WTC11 (cell line): ENCODE measurements at regions of chr2 and their contacts with region 1.

Region 1: DNA sequence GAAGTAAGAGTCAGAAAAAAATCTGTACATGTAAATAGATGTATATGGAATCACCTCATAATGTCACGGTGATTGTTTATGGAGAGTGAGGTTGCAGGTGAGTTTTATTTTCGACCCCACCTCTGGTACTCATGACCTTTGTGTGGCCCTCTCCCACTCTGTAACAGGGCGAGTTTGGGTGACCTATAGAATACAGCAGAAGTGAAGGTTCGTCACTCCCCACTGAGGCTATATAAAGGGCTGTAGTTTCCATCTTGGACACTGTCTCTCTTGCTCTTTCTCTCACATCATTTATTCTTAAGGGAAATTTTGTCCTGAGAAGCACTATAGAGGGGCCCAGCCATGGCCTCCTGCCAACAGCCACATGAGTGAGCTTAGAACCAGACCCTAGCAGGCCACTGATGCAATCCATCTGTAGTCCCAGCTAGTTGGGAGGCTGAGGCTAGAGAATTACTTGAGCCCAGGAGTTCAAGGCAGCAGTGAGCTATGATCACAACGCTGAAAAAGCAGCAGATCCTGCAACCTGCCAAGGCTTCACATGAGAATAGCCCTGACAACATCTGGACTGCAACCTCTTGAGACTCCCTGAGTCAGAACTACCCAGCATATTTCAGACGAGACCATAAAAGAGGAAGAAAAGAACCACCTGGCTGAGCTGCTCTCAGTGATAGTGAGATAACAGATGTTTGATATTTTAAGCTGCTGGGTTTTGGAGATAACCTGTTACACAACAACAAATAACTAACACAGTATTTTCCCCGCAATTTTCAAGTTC is 74.3 kb upstream of the SLC1A4 start:
- DNase-seq: no peak
- ATAC-seq: no peak
- H3K4me3 Mint-ChIP-seq: no peak overlapping the region
- H3K27ac Mint-ChIP-seq: no peak overlapping the region
- H3K4me1 Mint-ChIP-seq: peaks cover 39% of the 10 kb centered on the region
- H3K27me3 Mint-ChIP-seq: peaks cover 15% of the 10 kb centered on the region
- CTCF ChIP-seq: no peak

Region 2: DNA sequence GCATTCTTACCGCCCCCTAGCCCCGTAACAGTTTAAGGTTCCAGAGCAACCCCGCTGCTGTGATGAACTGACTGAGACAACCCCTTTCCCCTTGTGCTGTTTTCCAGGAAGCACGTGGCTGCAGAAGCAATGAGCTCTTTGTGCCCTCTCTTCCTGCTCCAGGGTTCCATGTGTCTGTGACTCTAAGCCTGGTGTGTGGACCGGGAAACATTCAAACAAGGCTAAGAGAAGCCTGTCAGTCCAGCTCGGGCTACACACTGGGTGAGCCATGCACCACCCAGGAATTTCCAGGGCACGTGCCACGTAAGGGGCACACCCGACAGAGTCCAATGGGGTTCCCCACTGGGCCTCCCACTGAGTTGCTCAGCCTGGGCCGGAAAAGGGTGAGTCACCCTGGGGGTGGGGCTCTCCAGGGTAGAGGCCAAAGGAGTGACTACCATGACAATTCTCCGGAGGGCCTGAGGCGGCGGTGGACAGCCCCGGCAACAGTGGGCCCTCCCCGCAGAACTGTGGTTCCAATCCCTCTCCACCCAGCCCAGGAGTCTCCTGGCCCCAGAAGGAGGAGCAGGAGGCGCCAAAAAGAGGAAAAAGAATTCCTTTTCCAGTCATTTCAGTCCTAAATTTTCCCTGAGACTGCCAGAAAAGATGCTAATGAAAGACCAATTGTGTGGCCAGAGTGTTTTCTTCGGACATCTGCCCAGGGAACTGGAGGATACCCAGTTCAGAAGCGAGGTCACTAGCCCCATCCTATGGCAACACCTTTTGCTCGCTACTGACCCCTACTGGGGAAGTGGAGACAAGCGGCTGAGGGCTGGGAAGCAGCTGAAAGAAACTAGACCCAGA is 83.6 kb before region 1 on chr2:
- CTCF ChIA-PET with region 1: no interaction called
- POLR2A ChIA-PET with region 1: no interaction called
- DNase-seq: peak; percentile 89
- ATAC-seq: peak; percentile 93
- H3K4me3 Mint-ChIP-seq: no peak overlapping the region
- H3K27ac Mint-ChIP-seq: no peak overlapping the region
- H3K4me1 Mint-ChIP-seq: 0 out of 2 replicates have a peak, but pooled peaks cover 6% of the 10 kb centered on the region
- H3K27me3 Mint-ChIP-seq: peaks cover 4% of the 10 kb centered on the region; the same call in 1 of the 2 replicates
- CTCF ChIP-seq: peak; percentile 85

Region 3: DNA sequence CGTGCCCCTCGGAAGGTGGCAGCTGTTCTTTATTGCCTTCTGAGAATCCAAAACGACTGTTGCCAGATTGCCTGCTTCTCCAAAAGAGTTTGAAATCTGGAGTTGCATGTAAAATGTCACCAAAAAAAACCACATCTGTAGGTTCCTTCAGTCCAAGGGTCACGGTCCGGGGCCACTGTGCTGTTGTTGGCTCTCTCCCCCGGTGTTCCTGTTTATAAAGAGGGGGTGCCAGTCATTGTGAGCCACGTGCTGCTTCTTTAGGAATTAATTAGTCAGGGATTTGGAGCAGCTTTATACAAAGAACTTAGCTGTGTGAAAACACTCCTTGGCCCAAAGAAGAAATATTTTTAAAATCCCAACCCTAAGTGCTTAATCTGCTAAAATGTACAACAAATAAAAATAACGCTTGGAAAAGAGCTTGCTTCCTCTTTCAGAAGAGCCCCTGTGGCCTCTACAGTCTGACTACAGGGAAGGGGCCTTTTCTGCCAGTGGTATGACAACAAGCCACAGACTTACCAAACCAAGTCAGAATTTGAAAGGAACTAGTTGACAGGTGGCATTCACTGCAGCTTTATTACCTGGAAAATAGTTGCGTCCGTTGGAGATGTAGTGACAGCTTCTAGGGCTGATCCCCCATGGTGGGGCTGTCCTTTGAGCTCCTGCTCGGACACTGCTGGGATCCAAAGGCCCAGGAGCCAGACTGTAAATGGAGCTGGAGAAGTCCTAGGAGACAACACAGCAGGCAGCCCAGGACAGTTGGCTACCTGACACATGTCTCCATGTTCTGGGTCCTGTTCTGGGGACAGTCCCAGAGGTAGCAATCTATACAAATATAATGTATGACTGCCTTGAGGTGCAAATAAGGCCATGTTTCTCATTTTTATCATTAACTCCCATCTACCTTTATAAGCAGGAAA is 10.3 kb before region 1 on chr2:
- CTCF ChIA-PET with region 1: interaction called, 40 read pairs
- POLR2A ChIA-PET with region 1: no interaction called
- DNase-seq: no peak
- ATAC-seq: no peak
- H3K4me3 Mint-ChIP-seq: no peak overlapping the region
- H3K27ac Mint-ChIP-seq: no peak overlapping the region
- H3K4me1 Mint-ChIP-seq: peaks cover 15% of the 10 kb centered on the region
- H3K27me3 Mint-ChIP-seq: no peaks in the 10 kb centered on the region
- CTCF ChIP-seq: no peak

Region 4: DNA sequence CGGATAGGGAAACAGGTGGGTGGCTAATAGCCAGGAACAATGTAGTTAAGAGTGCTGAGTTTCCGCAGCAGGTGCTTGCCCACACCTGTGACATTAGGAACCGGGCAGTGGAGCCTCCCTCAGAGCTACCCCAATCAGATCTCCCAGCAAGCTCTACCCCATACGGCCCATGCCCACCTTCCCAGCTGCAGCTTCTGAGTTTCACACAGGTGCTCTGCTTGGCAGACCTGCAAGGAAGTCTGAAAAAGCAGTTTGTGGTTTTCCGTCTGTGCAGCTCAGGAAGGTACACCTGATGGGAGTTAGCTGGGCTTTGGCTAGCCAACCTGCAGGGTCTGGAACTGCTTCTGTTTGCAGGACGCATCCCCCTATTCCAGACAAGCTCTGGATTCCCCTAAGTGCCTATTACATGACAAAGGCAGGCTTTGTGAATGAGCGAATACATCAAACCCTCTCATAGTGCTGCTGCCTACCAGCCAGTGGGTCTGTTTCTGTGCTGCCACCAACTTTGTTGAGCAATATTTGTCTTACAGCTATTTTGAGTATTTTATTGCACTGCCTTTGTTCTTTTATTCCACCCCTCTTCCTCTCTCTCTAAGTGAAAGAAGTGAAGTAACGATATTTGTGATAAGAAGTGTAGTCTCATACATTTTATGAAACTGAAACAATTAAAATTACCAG is 116.6 kb after region 1 on chr2:
- CTCF ChIA-PET with region 1: interaction called, 39 read pairs
- POLR2A ChIA-PET with region 1: no interaction called
- DNase-seq: peak; percentile 53
- ATAC-seq: peak; percentile 90
- H3K4me3 Mint-ChIP-seq: peak overlapping the region; percentile 30
- H3K27ac Mint-ChIP-seq: peak overlapping the region; percentile 85
- H3K4me1 Mint-ChIP-seq: peaks cover 36% of the 10 kb centered on the region
- H3K27me3 Mint-ChIP-seq: no peaks in the 10 kb centered on the region
- CTCF ChIP-seq: no peak

Region 5: DNA sequence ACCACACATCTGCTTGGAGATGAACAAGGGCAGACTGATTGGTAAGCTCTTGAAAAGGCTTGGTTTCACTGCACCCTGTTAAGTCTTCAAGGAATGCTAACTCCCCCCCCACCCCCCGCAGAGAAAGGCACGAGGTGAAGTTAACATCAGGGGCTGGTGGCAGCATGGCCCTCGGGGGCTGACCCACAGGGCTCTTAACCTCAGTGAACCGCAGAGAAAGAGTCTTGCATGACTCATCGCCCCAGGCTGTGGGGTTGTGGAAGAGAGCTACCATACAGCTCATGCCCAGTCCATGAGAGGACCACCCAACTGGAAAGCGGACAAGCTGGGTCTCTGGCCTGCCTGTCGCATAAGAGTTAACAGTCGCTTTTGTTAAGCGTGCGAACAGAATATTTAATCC is 130.7 kb after region 1 on chr2:
- CTCF ChIA-PET with region 1: interaction called, 19 read pairs
- POLR2A ChIA-PET with region 1: no interaction called
- DNase-seq: peak; percentile 52
- ATAC-seq: peak; percentile 73
- H3K4me3 Mint-ChIP-seq: no peak overlapping the region; the same call in 1 of the 2 replicates
- H3K27ac Mint-ChIP-seq: peak overlapping the region; percentile 84
- H3K4me1 Mint-ChIP-seq: peaks cover 42% of the 10 kb centered on the region
- H3K27me3 Mint-ChIP-seq: no peaks in the 10 kb centered on the region; the same call in 1 of the 2 replicates
- CTCF ChIP-seq: no peak

Region 6: GRCh38 chr2:65081232-65081685 is 166.3 kb after region 1 on chr2:
- CTCF ChIA-PET with region 1: no interaction called
- POLR2A ChIA-PET with region 1: no interaction called
- DNase-seq: no peak
- ATAC-seq: no peak
- H3K4me3 Mint-ChIP-seq: no peak overlapping the region
- H3K27ac Mint-ChIP-seq: no peak overlapping the region
- H3K4me1 Mint-ChIP-seq: peaks cover 23% of the 10 kb centered on the region
- H3K27me3 Mint-ChIP-seq: no peaks in the 10 kb centered on the region
- CTCF ChIP-seq: no peak

Region 7: GRCh38 chr2:65169760-65170136 is 254.8 kb after region 1 on chr2:
- CTCF ChIA-PET with region 1: interaction called, 20 read pairs
- POLR2A ChIA-PET with region 1: no interaction called
- DNase-seq: no peak
- ATAC-seq: no peak
- H3K4me3 Mint-ChIP-seq: no peak overlapping the region
- H3K27ac Mint-ChIP-seq: no peak overlapping the region
- H3K4me1 Mint-ChIP-seq: no peaks in the 10 kb centered on the region
- H3K27me3 Mint-ChIP-seq: no peaks in the 10 kb centered on the region
- CTCF ChIP-seq: no peak